PC-9 (cell line): ENCODE measurements at regions of chr7 and their contacts with region 1.

Region 1: GRCh38 chr7:66576646-66577045 is 52.0 kb upstream of the KCTD7 start:
- DNase-seq: no peak
- H3K4me3 ChIP-seq: no peak overlapping the region
- H3K27ac ChIP-seq: no peak overlapping the region
- H3K4me1 ChIP-seq: no peaks in the 10 kb centered on the region
- H3K27me3 ChIP-seq: no peaks in the 10 kb centered on the region
- CTCF ChIP-seq: no peak

Region 2: GRCh38 chr7:64892666-64893309 is 1683.9 kb before region 1 on chr7:
- CTCF ChIA-PET with region 1: interaction called, 13 read pairs
- POLR2A ChIA-PET with region 1: no interaction called
- intact Hi-C with region 1: no loop called
- DNase-seq: no peak
- H3K4me3 ChIP-seq: no peak overlapping the region
- H3K27ac ChIP-seq: no peak overlapping the region
- H3K4me1 ChIP-seq: no peaks in the 10 kb centered on the region
- H3K27me3 ChIP-seq: peaks cover 8% of the 10 kb centered on the region; the same call in 1 of the 2 replicates
- CTCF ChIP-seq: no peak

Region 3: DNA sequence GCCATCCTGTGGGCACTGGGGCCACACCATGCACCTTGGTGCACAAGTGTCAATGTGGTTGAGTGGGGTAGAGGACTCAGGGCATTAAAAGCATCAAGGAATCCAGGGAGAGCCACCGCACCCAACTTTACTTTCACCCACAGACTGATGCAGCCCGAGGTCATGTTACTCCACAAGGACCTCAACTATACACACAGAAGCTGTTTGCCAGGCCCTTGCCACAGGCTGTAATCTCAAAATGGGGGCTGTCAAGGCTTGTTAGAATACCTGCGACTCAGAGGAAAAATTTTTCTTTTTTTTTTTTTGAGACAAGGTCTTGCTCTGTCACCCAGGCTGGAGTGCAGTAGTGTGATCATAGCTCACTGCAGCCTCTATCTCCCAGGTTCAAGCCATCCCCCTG is 25.5 kb after region 1 on chr7:
- CTCF ChIA-PET with region 1: no interaction called
- POLR2A ChIA-PET with region 1: no interaction called
- intact Hi-C with region 1: no loop called
- DNase-seq: peak in 1 of 2 experiments; percentile 37
- H3K4me3 ChIP-seq: no peak overlapping the region
- H3K27ac ChIP-seq: no peak overlapping the region
- H3K4me1 ChIP-seq: peaks cover 10% of the 10 kb centered on the region; the same call in 1 of the 2 replicates
- H3K27me3 ChIP-seq: no peaks in the 10 kb centered on the region
- CTCF ChIP-seq: no peak